ENCODE measurements at regions of chr1 and their contacts with region 1.

Region 1: DNA sequence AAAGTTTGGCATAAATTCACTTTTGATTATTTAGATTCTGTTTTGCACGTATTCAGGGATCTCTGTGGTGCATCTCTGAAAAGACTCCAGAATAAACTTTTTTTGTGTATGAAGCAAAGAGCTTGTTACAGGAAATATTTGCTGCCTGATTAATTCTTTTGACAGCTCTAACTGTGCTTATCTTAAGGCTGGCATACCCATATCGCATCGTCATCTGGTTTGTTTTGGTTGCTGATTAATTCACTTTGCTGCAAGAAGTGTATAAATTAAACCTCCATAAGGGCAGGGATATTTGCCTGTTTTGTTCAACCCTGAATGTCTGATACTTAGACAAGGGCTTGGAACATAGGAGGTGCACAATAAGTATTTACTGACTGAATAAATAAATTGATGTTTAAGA is 17.5 kb upstream of the DUSP10 start:
- DNase-seq: no peak
- H3K4me3 Mint-ChIP-seq: no peak overlapping the region
- H3K27ac Mint-ChIP-seq: no peak overlapping the region
- H3K4me1 Mint-ChIP-seq: peaks cover 49% of the 10 kb centered on the region
- H3K27me3 Mint-ChIP-seq: no peaks in the 10 kb centered on the region
- CTCF ChIP-seq: no peak

Region 2: GRCh38 chr1:220818421-220819173 is 940.8 kb before region 1 on chr1:
- CTCF ChIA-PET with region 1: no interaction called
- intact Hi-C with region 1: no loop called
- DNase-seq: no peak
- H3K4me3 Mint-ChIP-seq: no peak overlapping the region
- H3K27ac Mint-ChIP-seq: no peak overlapping the region
- H3K4me1 Mint-ChIP-seq: no peaks in the 10 kb centered on the region
- H3K27me3 Mint-ChIP-seq: no peaks in the 10 kb centered on the region
- CTCF ChIP-seq: no peak

Region 3: DNA sequence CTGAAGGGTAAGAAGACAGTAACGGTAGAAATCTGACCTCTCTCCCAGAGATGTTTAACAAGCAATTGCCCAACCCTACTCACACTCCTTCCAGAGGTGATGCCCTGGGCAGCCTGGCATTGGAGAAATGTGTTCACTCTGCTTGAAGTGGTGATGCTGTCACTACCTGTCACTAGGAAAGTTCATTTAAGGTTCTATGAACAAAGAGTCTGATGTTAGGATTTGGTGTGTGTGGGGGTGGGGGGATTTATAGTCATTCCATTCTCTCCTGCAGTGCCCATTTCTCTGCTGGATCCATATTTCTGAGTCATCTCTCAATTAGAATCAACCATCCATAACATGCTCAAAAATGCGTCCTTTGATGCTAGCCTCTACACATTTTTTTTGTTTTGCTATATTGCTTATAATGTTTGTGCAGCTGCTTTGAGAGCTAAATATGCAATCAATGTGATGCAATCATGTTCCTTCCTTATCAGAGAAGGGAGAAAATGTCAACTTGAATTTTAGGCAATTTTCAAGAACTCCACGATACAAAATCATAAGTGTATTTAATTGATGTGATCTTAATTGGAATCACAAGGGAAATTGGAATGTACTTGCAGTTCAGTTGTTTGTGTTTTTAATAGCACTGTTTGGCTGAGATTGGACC is 191.5 kb before region 1 on chr1:
- CTCF ChIA-PET with region 1: no interaction called
- intact Hi-C with region 1: no loop called
- DNase-seq: no peak
- H3K4me3 Mint-ChIP-seq: no peak overlapping the region
- H3K27ac Mint-ChIP-seq: no peak overlapping the region
- H3K4me1 Mint-ChIP-seq: no peaks in the 10 kb centered on the region
- H3K27me3 Mint-ChIP-seq: no peaks in the 10 kb centered on the region
- CTCF ChIP-seq: no peak

Region 4: DNA sequence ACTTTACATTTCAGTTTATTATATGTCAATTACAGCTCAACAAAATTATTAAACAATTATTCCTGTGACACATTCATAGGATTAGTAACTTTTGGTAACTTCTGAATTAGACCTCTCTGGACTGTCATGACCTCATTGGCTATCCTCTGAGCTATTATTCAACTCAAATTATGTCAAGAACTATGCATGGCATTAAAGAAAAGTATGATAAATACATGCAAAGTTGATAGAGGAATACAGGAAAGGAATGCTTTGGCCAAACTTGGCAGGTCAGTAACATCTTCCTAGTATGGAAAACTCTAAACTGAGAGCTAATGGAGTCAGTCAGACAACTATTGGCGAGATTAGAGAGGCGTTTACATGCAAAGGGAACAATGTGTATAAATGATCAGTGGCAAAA is 176.0 kb before region 1 on chr1:
- CTCF ChIA-PET with region 1: no interaction called
- intact Hi-C with region 1: no loop called
- DNase-seq: no peak
- H3K4me3 Mint-ChIP-seq: no peak overlapping the region
- H3K27ac Mint-ChIP-seq: no peak overlapping the region
- H3K4me1 Mint-ChIP-seq: peaks cover 12% of the 10 kb centered on the region
- H3K27me3 Mint-ChIP-seq: no peaks in the 10 kb centered on the region
- CTCF ChIP-seq: no peak

Region 5: DNA sequence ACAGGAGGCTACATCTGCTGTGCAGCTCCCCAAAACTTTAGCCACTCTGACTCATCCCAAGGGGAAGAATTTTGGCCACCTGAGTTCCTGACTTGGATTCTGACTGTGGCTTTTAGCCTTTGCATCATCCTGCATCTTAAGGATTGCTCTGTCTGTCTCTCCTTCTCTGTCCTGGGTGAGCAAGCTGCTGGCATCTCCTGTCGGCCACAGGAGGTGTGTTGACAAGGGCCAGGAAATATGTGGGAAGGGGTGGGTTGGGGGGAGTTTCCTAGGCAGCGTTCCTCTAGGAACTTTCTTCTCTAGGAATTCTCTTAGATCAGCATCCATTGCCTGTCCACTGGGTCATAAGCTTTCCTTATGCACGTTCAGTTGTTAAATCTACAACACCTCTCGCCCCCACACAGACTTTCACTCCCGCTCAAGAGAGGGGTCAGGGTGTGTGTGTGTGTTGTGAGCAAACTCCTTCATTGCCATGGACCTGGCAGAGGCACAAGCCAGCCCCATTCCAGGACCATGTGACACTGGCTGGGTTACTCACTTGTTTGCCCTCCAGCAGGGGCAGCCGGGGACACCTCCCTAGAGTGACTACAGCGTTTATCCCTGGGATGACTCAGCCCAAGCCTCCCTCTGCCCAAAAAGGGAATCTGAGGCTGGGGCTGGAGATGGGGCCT is 127.4 kb after region 1 on chr1:
- CTCF ChIA-PET with region 1: no interaction called
- intact Hi-C with region 1: loop called (anchors 5 kb)
- DNase-seq: peak; percentile 91
- H3K4me3 Mint-ChIP-seq: peak overlapping the region; percentile 57
- H3K27ac Mint-ChIP-seq: peak overlapping the region; percentile 93
- H3K4me1 Mint-ChIP-seq: peaks cover 48% of the 10 kb centered on the region
- H3K27me3 Mint-ChIP-seq: no peaks in the 10 kb centered on the region
- CTCF ChIP-seq: peak; percentile 23